Activated CD8-positive, alpha-beta memory T cell treated with anti-CD3 and anti-CD28 coated beads, Interleukin-2, amount 10 ng/mL, durations not matched to agents 7 days and 5 days (primary cell): ENCODE measurements at regions of chr12 and their contacts with region 1.

Region 1: GRCh38 chr12:1939801-1940607 is 21.6 kb upstream of the CACNA2D4 start:
- DNase-seq: peak; percentile 91
- ATAC-seq: peak; percentile 98
- H3K4me3 Mint-ChIP-seq: no peak overlapping the region
- H3K27ac Mint-ChIP-seq: no peak overlapping the region
- H3K4me1 Mint-ChIP-seq: peaks cover 2% of the 10 kb centered on the region
- H3K27me3 Mint-ChIP-seq: no peaks in the 10 kb centered on the region

Region 2: DNA sequence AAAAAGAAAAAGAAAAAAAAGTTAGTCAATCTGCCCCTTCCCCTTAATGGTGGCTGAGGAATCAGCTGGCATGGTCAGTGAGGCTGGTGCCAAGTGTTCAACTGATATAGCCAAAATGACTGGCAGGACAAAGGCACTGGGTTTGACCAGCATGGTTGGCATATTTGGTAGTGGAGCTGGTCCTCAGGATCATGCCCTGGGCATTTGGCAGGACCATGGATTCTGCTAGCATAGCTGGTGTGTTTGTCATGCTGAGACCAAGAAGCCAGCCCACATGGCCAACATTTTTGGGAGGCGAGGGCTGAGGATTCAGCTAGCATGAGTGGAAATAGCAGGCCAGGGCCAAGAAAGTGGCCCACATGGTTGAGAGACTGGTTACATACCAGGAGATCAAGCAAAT is 482.1 kb before region 1 on chr12:
- CTCF ChIA-PET with region 1: no interaction called
- DNase-seq: no peak
- ATAC-seq: no peak
- H3K4me3 Mint-ChIP-seq: no peak overlapping the region
- H3K27ac Mint-ChIP-seq: no peak overlapping the region
- H3K4me1 Mint-ChIP-seq: peaks cover 4% of the 10 kb centered on the region
- H3K27me3 Mint-ChIP-seq: no peaks in the 10 kb centered on the region

Region 3: GRCh38 chr12:1650260-1650977 is 289.6 kb before region 1 on chr12:
- CTCF ChIA-PET with region 1: interaction called, 58 read pairs
- DNase-seq: no peak
- ATAC-seq: no peak
- H3K4me3 Mint-ChIP-seq: no peak overlapping the region
- H3K27ac Mint-ChIP-seq: no peak overlapping the region
- H3K4me1 Mint-ChIP-seq: peaks cover 11% of the 10 kb centered on the region
- H3K27me3 Mint-ChIP-seq: peaks cover 42% of the 10 kb centered on the region

Region 4: GRCh38 chr12:1719139-1719538 is 220.9 kb before region 1 on chr12:
- CTCF ChIA-PET with region 1: no interaction called
- DNase-seq: no peak
- ATAC-seq: no peak
- H3K4me3 Mint-ChIP-seq: no peak overlapping the region
- H3K27ac Mint-ChIP-seq: no peak overlapping the region
- H3K4me1 Mint-ChIP-seq: peaks cover 22% of the 10 kb centered on the region
- H3K27me3 Mint-ChIP-seq: no peaks in the 10 kb centered on the region

Region 5: GRCh38 chr12:1814252-1814651 is 125.8 kb before region 1 on chr12:
- CTCF ChIA-PET with region 1: interaction called, 12 read pairs
- DNase-seq: no peak
- ATAC-seq: no peak
- H3K4me3 Mint-ChIP-seq: no peak overlapping the region
- H3K27ac Mint-ChIP-seq: no peak overlapping the region
- H3K4me1 Mint-ChIP-seq: peaks cover 9% of the 10 kb centered on the region
- H3K27me3 Mint-ChIP-seq: peaks cover 8% of the 10 kb centered on the region

Region 6: DNA sequence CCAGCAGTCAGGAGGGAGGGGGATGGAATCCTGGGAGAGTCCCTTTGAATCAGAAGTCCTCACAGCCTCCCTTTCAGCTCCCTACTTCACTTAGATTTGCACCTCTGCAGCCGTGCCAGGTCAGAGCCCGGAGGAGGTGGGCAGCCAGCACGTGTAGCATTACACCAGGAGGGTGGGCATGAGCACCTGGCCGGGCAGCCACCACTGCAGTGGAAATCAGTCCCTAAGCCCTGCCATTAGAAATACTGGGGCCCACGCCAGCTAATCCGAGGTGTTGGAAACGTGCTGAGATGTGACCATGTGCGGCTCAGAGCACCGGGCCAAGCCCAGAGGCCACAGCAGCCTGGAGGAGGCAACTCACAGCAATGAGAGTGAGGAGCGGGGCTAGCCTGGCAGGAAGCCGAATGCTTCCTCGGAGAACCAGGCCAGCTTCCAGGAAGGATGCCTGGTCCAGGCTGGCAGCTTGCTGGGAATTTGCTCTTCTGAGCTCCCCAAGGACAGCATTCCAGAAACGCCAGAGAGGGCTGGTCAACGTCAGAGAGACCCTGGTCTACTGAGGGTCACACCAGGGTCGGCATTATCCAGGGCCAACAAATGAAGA is 12.2 kb before region 1 on chr12:
- CTCF ChIA-PET with region 1: interaction called, 19 read pairs
- DNase-seq: peak; percentile 31
- ATAC-seq: no peak
- H3K4me3 Mint-ChIP-seq: no peak overlapping the region
- H3K27ac Mint-ChIP-seq: no peak overlapping the region
- H3K4me1 Mint-ChIP-seq: peaks cover 6% of the 10 kb centered on the region
- H3K27me3 Mint-ChIP-seq: no peaks in the 10 kb centered on the region

Region 7: GRCh38 chr12:2113119-2113912 is 173.3 kb after region 1 on chr12:
- CTCF ChIA-PET with region 1: no interaction called
- DNase-seq: no peak
- ATAC-seq: no peak
- H3K4me3 Mint-ChIP-seq: no peak overlapping the region
- H3K27ac Mint-ChIP-seq: no peak overlapping the region
- H3K4me1 Mint-ChIP-seq: no peaks in the 10 kb centered on the region
- H3K27me3 Mint-ChIP-seq: no peaks in the 10 kb centered on the region